Testis (tissue), 5 donors: ENCODE measurements at regions of chr5 and their contacts with region 1.

Region 1: DNA sequence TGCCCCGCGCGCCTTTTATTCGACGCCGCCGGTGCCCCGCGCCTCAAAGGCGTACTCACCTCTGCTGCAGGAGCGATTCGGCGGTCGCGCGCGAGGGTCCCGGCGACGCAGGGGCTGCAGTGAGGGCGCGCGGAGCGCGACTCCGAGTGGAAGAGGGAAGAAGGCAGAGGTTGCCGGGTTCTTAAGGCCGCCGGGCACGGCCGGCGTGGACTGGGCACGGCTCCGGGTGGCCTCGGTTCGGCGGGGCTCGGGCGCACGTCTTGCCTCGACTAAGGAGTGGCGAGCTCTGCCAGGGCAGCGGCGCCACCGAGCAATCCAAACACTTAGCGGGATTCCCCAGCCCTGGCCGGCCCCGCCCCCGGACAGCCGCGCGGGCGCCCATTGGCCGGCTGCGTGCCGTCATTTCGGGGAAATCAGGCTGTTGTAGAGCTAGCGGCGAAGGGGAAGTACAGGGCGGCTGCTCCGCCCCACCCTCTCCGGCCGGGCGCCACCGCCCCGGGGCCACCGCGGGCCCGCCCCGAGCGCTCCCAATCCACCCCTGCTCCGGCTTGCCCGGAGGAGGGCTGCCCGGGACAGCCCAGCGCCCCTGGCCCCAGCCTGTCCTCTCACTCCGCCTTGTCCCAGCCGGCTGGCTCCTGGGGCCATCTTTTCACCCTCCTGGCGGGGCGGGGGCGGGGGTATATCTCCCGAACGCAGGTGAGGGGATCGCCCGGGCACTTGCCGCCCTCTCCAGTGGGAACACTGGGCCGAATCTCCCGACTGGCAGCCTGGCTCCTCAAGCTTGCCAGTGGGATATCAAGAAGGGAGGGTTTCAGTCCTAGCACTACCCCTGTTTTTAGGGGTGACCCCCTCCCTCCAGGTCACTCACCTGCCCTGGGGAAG is at the start of gene IRF1:
- DNase-seq: peak; percentile 96
- H3K4me3 ChIP-seq: peak within 1 kb of the TSS; percentile 65 to 72
- H3K27ac ChIP-seq: peak within 1 kb of the TSS; percentile 91 to 92
- H3K4me1 ChIP-seq: peaks cover 37% of the 10 kb centered on the region
- H3K27me3 ChIP-seq: no peaks in the 10 kb centered on the region
- CTCF ChIP-seq: no peak
- POLR2A ChIP-seq: no peak
- total RNA-seq, gene IRF1: 20.2 to 22.5 TPM

Region 2: DNA sequence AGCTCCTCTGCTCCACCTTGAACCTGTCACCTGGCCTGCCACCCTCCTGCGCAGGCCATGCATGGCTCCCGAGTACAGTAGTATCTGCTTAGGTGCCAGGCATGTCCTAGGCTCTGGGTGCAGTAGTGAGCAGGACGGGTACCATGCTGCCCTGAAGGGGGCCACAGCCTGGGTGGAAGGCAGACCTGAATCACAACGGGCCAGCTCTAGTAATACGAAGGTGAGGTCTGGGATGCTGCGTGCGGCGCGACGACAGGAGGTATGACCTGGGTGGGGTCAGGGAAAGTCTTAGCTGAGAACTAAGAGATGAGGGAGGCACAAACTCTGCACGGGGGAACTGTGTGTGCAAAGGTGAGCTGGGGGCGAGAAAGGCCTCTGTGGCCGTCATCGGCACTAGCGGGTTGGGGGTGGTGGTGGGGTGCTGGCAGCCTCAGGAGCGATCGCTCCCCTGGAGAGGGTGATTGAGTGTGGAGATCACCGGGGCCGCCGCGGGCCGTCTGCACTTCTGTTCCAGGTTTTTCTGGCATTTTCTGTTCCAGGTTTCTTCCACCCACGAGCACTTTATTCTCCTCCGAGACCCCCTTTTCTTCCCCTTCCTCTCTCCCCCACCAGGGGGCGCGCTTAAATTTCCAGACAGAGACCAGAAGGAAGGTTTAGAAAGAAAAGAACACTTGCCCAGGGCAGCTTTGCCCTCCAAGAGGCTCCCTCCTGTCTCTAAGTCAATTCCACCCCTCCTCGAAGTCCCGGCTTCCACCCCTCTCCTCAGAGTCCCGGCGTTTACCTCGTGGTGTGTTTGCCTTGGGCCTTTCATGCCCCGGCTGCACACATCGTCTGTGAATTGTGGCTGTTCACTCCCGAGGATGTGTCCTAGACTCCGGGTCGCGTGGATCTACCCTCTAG is 218.2 kb before region 1 on chr5:
- intact Hi-C with region 1: loop called (anchors 10 kb)
- DNase-seq: peak; percentile 63
- H3K4me3 ChIP-seq: peak overlapping the region in 1 of 2 donors; percentile 13
- H3K27ac ChIP-seq: no peak overlapping the region
- H3K4me1 ChIP-seq: no peaks in the 10 kb centered on the region
- H3K27me3 ChIP-seq: no peaks in the 10 kb centered on the region
- CTCF ChIP-seq: peak; percentile 52 to 89 (median 61)
- POLR2A ChIP-seq: no peak

Region 3: GRCh38 chr5:132419502-132420468 is 70.9 kb before region 1 on chr5:
- intact Hi-C with region 1: loop called (anchors 5 kb)
- DNase-seq: peak; percentile 77
- H3K4me3 ChIP-seq: no peak overlapping the region
- H3K27ac ChIP-seq: peak overlapping the region in 1 of 2 donors; percentile 47
- H3K4me1 ChIP-seq: peaks cover 17% of the 10 kb centered on the region
- H3K27me3 ChIP-seq: no peaks in the 10 kb centered on the region
- CTCF ChIP-seq: peak; percentile 83 to 89 (median 88)
- POLR2A ChIP-seq: no peak